Activated B cell treated with CpG ODN at 0.5 μM for 24 hours (primary cell): ENCODE measurements at regions of chr12 and their contacts with region 1.

Region 1: GRCh38 chr12:8544295-8544694 is 3.6 kb upstream of the CLEC4E start:
- DNase-seq: no peak
- ATAC-seq: peak; percentile 66
- H3K4me3 Mint-ChIP-seq: no peak overlapping the region
- H3K27ac Mint-ChIP-seq: no peak overlapping the region
- H3K4me1 Mint-ChIP-seq: no peaks in the 10 kb centered on the region
- H3K27me3 Mint-ChIP-seq: peaks cover 23% of the 10 kb centered on the region
- CTCF ChIP-seq: peak; percentile 96

Region 2: DNA sequence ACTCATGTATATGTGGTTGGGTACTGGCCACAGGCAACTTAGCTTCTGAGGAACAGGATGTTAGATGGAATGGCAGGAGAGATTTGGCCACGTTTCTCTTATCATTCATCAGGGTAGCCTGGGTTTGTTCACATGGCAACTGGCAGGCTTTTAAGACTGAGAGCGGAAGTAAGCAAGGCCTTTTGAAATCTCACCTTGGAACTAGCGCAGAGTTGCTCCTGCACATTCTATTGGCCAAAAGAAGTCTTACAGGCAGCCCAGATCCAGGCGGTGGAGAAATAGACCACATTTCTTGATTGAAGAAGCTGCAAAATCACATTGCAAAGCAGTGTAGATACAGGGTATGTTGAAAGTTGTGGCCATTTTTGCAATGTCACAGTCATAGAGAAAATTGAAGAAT is 417.2 kb before region 1 on chr12:
- CTCF ChIA-PET with region 1: no interaction called
- POLR2A ChIA-PET with region 1: no interaction called
- intact Hi-C with region 1: no loop called
- DNase-seq: no peak
- ATAC-seq: no peak
- H3K4me3 Mint-ChIP-seq: no peak overlapping the region
- H3K27ac Mint-ChIP-seq: no peak overlapping the region
- H3K4me1 Mint-ChIP-seq: peaks cover 30% of the 10 kb centered on the region
- H3K27me3 Mint-ChIP-seq: no peaks in the 10 kb centered on the region
- CTCF ChIP-seq: no peak

Region 3: DNA sequence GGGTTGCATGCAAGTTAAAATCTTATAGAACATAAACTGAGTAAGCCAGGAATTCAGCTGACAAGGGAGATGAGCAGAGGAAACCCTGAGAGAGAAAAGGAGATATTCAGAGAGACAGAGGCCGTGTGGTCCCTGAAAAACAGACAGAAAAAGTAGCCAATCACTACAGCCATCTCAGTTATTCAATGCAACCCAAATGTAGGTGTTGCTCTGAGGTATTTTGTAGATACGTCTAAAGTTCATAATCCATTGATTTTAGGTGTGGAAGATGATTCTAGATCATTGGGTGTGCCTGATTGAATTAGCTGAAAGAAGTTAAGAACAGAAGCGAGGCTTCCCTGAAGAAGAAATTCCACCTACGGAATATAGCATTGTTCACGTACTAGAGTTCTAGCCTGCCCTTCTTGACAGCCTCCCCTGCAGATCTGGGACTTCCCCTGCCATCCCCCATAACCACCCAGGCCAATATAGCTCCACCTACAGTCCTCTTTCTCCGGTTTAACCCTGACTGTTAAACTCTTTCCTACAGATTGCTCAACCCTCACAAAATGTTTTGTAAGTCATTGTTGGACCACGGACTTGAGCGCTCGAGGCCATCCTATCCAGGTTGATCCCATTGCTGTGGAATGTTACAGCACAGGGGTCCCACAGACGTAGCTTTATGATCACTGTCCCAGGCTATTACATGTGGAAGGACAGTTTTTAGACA is 46.7 kb after region 1 on chr12:
- CTCF ChIA-PET with region 1: interaction called, 18 read pairs
- POLR2A ChIA-PET with region 1: no interaction called
- intact Hi-C with region 1: loop called (anchors 1 kb)
- DNase-seq: no peak
- ATAC-seq: peak; percentile 95
- H3K4me3 Mint-ChIP-seq: peak overlapping the region; percentile 13
- H3K27ac Mint-ChIP-seq: no peak overlapping the region
- H3K4me1 Mint-ChIP-seq: peaks cover 10% of the 10 kb centered on the region
- H3K27me3 Mint-ChIP-seq: no peaks in the 10 kb centered on the region
- CTCF ChIP-seq: no peak

Region 4: DNA sequence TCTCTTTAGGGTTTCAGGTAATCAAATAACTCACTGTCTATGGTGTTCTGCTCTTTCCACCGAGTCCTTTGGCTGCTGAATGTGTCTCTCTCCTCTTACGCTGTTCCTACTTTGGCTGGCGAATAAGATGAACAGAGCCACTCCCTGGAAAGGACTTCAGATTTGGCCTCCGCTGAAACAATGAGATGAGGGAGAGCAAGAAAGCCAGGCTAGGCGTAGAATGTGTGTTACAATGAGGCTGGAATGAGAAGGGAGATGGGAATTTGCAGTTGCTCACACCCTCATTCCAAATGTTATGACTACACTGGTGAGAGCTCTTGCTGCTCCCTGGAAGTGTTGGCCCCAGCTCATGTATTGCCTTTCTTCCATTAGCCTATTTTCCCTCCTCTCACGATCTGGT is 118.3 kb after region 1 on chr12 and contains the start of gene MFAP5:
- CTCF ChIA-PET with region 1: interaction called, 13 read pairs
- POLR2A ChIA-PET with region 1: no interaction called
- intact Hi-C with region 1: no loop called
- DNase-seq: no peak
- ATAC-seq: no peak
- H3K4me3 Mint-ChIP-seq: no peak within 1 kb of the TSS
- H3K27ac Mint-ChIP-seq: no peak within 1 kb of the TSS
- H3K4me1 Mint-ChIP-seq: peaks cover 4% of the 10 kb centered on the region
- H3K27me3 Mint-ChIP-seq: peaks cover 2% of the 10 kb centered on the region
- CTCF ChIP-seq: no peak
- total RNA-seq, gene MFAP5: 0.35 TPM in 1 of 2 replicates, not detected in the other

Region 5: DNA sequence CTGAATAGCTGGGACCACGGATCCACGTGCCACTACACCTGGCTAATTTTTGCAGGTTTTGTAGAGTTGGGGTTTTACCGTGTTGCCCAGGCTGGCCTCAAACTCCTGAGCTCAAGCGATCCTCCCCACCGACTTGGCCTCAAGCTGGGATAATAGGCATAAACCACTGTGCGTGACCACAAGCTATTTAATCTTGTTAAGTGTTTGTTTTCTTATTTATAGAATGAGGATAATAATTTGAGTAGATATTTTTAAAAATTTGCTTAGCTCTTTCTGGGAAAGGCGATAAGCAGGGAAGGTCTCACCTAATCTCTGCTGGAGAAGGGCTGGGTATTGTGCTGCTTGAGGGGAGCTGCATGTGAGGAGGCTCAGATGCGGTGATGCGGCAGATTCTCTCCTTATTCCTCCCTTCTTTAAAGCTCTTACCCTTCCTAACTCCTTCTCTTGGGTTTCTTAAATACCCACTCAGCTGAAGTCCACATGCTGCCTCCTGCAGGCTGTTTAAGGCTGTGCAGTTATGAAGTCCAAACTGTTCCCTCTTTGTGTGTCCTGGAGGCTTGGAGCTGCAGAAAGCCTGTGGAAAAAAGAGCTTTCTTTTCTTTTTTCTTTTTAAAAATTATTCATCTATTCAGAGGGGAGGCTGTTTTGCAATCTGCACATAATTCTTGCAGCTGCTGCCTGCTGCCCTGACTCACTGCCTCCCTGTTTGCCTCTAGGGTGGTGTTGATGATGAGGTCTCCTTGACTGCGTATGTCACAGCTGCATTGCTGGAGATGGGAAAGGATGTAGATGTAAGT is 316.1 kb after region 1 on chr12:
- CTCF ChIA-PET with region 1: interaction called, 15 read pairs
- POLR2A ChIA-PET with region 1: no interaction called
- intact Hi-C with region 1: loop called (anchors 1 kb)
- DNase-seq: no peak
- ATAC-seq: peak; percentile 34
- H3K4me3 Mint-ChIP-seq: no peak overlapping the region
- H3K27ac Mint-ChIP-seq: no peak overlapping the region
- H3K4me1 Mint-ChIP-seq: no peaks in the 10 kb centered on the region
- H3K27me3 Mint-ChIP-seq: peaks cover 3% of the 10 kb centered on the region
- CTCF ChIP-seq: no peak

Region 6: DNA sequence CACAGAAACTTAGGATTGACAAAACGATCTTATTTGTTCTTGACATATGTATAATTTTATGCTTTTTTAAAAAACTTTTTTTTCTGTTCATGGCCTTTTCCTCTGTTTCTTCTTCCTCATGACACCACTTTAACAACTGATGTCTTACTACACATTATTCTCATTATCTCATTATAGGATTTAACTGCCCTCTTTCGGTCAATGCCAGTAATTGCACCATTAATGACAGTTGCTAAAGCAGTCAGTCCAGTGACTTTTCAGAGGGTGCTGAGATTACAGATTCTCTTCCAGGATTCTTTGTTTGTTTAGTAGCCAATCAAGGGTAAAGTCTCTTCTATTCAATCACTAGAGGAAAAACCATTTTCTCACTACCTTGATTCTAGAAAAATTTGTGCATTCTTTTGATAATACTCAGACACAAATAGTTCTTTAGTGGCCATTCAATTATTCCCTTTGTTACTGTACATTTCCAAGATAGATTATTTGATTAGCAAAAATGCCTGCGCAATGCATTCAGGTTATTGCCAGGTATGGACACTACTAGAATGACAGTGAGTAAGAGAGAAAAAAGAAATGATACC is 495.2 kb after region 1 on chr12:
- CTCF ChIA-PET with region 1: interaction called, 13 read pairs
- POLR2A ChIA-PET with region 1: no interaction called
- intact Hi-C with region 1: loop called (anchors 1 kb)
- DNase-seq: no peak
- ATAC-seq: peak; percentile 69
- H3K4me3 Mint-ChIP-seq: no peak overlapping the region
- H3K27ac Mint-ChIP-seq: no peak overlapping the region
- H3K4me1 Mint-ChIP-seq: no peaks in the 10 kb centered on the region
- H3K27me3 Mint-ChIP-seq: peaks cover 2% of the 10 kb centered on the region
- CTCF ChIP-seq: peak; percentile 63

Region 7: DNA sequence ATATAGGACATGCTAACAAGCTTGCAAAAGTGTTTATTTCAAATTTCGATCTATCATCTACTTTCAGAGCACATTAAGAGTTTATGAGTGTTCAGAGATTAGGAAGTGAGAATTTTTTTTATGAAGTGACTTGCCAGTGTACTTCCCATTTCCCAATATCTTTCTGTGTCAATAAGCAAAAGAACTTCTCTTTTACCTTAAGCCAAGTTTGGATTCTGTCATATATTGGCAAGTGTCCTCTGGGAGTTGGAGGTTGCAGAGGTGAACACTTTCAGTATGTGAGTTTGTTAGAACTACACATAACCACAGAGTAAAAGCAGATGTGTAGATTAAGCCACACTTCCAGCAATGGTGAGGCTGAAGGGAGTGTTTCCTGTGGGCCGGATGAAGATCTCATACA is 1266.4 kb after region 1 on chr12:
- CTCF ChIA-PET with region 1: no interaction called
- POLR2A ChIA-PET with region 1: no interaction called
- intact Hi-C with region 1: no loop called
- DNase-seq: no peak
- ATAC-seq: no peak
- H3K4me3 Mint-ChIP-seq: no peak overlapping the region
- H3K27ac Mint-ChIP-seq: no peak overlapping the region
- H3K4me1 Mint-ChIP-seq: peaks cover 20% of the 10 kb centered on the region
- H3K27me3 Mint-ChIP-seq: peaks cover 17% of the 10 kb centered on the region
- CTCF ChIP-seq: no peak